Posterior vena cava (tissue), 2 donors: ENCODE measurements at regions of chr5 and their contacts with region 1.

Region 1: DNA sequence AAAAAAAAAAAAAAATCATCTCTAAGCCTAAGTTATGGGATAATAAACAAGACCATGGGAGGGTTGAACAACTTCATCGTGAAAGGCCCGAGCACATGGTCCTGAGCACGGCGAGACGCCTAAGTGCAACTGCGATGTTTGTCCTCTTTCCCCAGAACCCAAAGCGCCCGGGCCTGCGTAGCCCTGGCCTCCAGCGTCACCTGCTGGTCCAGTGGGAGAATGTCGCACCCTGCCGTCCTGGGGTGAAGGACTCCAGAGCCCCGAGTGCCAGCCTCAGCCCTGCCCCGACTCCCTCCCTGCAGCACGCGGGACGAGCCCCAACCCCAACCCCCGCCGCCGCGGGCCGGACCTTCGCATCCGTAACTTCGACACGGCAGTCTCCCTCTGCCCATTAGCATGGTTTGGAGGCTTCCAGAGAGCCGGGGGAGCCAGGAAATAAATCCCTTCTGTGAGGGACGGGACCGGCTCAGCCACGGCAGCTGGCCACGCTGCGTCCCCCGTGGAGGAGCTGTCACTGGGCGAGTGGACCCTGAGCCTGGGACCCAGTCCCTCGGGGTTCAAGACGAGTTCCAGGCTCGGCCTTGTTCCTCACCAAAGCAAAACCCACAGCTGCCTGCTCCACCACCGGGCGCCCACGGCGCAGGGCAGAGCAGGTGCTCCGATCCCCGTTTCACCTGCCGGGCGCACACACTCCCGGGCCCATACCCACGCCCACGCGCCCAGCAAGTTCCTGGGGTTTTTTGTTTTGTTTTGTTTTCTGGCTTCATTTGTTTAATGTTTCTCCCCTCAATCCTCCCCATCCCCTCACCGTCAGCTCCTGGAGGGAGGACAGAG is 132.5 kb upstream of the HAND1 start:
- DNase-seq: peak; percentile 88

Region 2: GRCh38 chr5:154467655-154468354 is 142.7 kb before region 1 on chr5:
- intact Hi-C with region 1: loop called (anchors 2 to 5 kb)
- DNase-seq: peak; percentile 95